CD8-positive, alpha-beta memory T cell (primary cell): ENCODE measurements at regions of chr22 and their contacts with region 1.

Region 1: DNA sequence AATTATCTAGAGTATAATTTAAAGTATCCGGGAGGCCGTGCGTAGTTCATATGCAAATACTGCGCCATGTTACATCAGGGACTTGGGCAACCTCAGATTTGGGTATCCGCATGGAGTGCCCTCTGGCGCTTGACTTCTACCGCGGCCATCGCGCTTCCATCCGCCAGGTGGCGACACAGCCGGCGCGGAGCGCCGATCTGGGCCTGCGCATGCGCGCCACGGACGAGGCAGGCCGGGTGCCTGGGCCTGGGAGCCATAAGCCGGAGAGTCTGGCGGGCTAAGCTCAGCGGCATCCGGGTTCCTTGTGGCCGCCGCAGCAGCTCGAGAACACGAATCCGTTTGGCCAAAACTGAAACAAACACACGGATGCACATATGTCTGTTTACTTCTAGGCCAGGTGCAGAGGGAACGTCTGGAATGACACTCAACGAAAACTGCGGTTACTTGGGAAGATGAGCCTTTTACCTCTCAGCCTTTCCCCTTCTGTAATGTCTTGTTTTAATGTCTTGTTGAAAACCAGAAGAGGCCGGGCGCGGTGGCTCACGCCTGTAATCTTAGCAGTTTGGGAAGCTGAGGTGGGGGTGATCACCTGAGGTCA is 21.9 kb downstream of the SNU13 start:
- DNase-seq: peak; percentile 88 to 96 (median 93)
- H3K4me3 ChIP-seq: peak overlapping the region; percentile 54
- H3K4me3 Mint-ChIP-seq: peak overlapping the region; percentile 64 to 91 (median 88)
- H3K27ac ChIP-seq: peak overlapping the region; percentile 79
- H3K27ac Mint-ChIP-seq: peak overlapping the region; percentile 81 to 98 (median 96)
- H3K4me1 ChIP-seq: peaks cover 10% of the 10 kb centered on the region
- H3K4me1 Mint-ChIP-seq: peaks cover 13 to 15% (median 15%) of the 10 kb centered on the region in 3 donors
- H3K27me3 ChIP-seq: no peaks in the 10 kb centered on the region
- H3K27me3 Mint-ChIP-seq: no peaks in the 10 kb centered on the region

Region 2: GRCh38 chr22:41565403-41566054 is 101.2 kb before region 1 on chr22:
- CTCF ChIA-PET with region 1: no interaction called
- POLR2A ChIA-PET with region 1: no interaction called
- DNase-seq: no peak
- H3K4me3 ChIP-seq: no peak overlapping the region
- H3K4me3 Mint-ChIP-seq: no peak overlapping the region
- H3K27ac ChIP-seq: no peak overlapping the region
- H3K27ac Mint-ChIP-seq: peak overlapping the region in 2 of 8 donors; percentile 8 to 32
- H3K4me1 ChIP-seq: no peaks in the 10 kb centered on the region
- H3K4me1 Mint-ChIP-seq: no peaks in the 10 kb centered on the region
- H3K27me3 ChIP-seq: no peaks in the 10 kb centered on the region
- H3K27me3 Mint-ChIP-seq: peaks cover 10 to 13% of the 10 kb centered on the region in 2 donors

Region 3: DNA sequence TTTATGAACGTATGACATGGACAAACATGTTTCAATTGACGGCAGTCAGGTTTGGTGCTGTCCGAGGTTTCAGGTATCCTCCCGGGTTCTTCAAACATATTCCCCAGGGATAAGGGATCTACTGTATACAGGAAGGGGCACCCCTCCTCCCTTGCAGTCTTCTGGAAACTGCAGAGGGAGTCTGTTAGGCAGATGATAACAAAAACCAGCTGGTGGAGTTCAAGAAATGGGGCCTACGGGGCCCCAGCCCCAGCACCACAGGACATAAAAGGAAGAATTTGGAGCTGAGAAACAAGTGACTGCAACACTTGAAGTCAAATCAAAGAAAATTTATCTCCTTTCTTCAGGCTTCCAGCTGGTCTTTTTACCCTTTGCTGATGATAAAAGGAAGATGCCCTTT is 10.2 kb before region 1 on chr22:
- CTCF ChIA-PET with region 1: interaction called, 12 read pairs
- POLR2A ChIA-PET with region 1: interaction called, 4 read pairs
- DNase-seq: no peak
- H3K4me3 ChIP-seq: no peak overlapping the region
- H3K4me3 Mint-ChIP-seq: peak overlapping the region in 1 of 7 donors; percentile 36
- H3K27ac ChIP-seq: no peak overlapping the region
- H3K27ac Mint-ChIP-seq: peak overlapping the region in 2 of 8 donors; percentile 23 to 30
- H3K4me1 ChIP-seq: no peaks in the 10 kb centered on the region
- H3K4me1 Mint-ChIP-seq: no peaks in the 10 kb centered on the region
- H3K27me3 ChIP-seq: no peaks in the 10 kb centered on the region
- H3K27me3 Mint-ChIP-seq: no peaks in the 10 kb centered on the region

Region 4: GRCh38 chr22:41682033-41682807 is 15.5 kb after region 1 on chr22:
- CTCF ChIA-PET with region 1: interaction called, 40 read pairs
- POLR2A ChIA-PET with region 1: interaction called, 5 read pairs
- DNase-seq: peak; percentile 76 to 90 (median 81)
- H3K4me3 ChIP-seq: peak overlapping the region; percentile 73
- H3K4me3 Mint-ChIP-seq: peak overlapping the region; percentile 94 to 99 (median 99)
- H3K27ac ChIP-seq: peak overlapping the region; percentile 85
- H3K27ac Mint-ChIP-seq: peak overlapping the region; percentile 98 to 100 (median 100)
- H3K4me1 ChIP-seq: peaks cover 11% of the 10 kb centered on the region
- H3K4me1 Mint-ChIP-seq: peaks cover 23 to 61% (median 43%) of the 10 kb centered on the region in 3 donors
- H3K27me3 ChIP-seq: no peaks in the 10 kb centered on the region
- H3K27me3 Mint-ChIP-seq: peaks cover 0 to 2% of the 10 kb centered on the region in 2 donors

Region 5: GRCh38 chr22:41688365-41689211 is 21.8 kb after region 1 on chr22 and contains the start of gene SNU13:
- CTCF ChIA-PET with region 1: interaction called, 40 read pairs
- POLR2A ChIA-PET with region 1: interaction called, 20 read pairs
- DNase-seq: peak; percentile 90 to 94 (median 91)
- H3K4me3 ChIP-seq: peak within 1 kb of the TSS; percentile 89
- H3K4me3 Mint-ChIP-seq: peak within 1 kb of the TSS; percentile 92 to 98 (median 95)
- H3K27ac ChIP-seq: peak within 1 kb of the TSS; percentile 98
- H3K27ac Mint-ChIP-seq: peak within 1 kb of the TSS; percentile 92 to 99 (median 98)
- H3K4me1 ChIP-seq: peaks cover 13% of the 10 kb centered on the region
- H3K4me1 Mint-ChIP-seq: peaks cover 25 to 47% (median 37%) of the 10 kb centered on the region in 3 donors
- H3K27me3 ChIP-seq: no peaks in the 10 kb centered on the region
- H3K27me3 Mint-ChIP-seq: no peaks in the 10 kb centered on the region
- total RNA-seq, gene SNU13: 315 to 324 TPM